PC-3 (cell line): ENCODE measurements at regions of chrX and their contacts with region 1.

Region 1: GRCh38 chrX:54449929-54450328 is 9.7 kb downstream of the TSR2 start:
- DNase-seq: no peak
- ATAC-seq: no peak
- H3K4me3 ChIP-seq: no peak overlapping the region
- H3K27ac ChIP-seq: no peak overlapping the region
- H3K4me1 ChIP-seq: no peaks in the 10 kb centered on the region
- H3K27me3 ChIP-seq: no peaks in the 10 kb centered on the region
- CTCF ChIP-seq: no peak

Region 2: DNA sequence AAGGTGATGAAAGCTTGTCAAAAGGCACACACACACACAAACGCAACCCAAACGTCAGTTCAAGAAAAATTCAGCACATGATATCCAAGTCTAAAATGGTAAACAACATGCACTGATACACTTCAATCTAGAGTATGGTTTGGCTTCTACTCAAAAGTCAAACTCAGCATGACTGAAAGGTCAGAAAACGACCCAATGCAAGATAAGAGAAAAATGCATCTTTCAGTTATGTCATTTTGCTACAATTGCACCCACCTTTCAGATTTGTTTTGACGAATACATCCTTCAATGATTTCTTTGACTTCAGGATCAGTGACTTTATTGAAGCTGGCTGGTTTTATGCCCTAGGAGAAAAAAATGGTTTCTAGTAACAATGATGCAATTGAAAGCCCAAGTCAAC is 148.4 kb before region 1 on chrX:
- CTCF ChIA-PET with region 1: no interaction called
- POLR2A ChIA-PET with region 1: interaction called, 12 read pairs
- intact Hi-C with region 1: no loop called
- DNase-seq: no peak
- ATAC-seq: no peak
- H3K4me3 ChIP-seq: no peak overlapping the region
- H3K27ac ChIP-seq: no peak overlapping the region
- H3K4me1 ChIP-seq: no peaks in the 10 kb centered on the region
- H3K27me3 ChIP-seq: no peaks in the 10 kb centered on the region
- CTCF ChIP-seq: no peak

Region 3: GRCh38 chrX:54479136-54480111 is 29.5 kb after region 1 on chrX:
- CTCF ChIA-PET with region 1: no interaction called
- POLR2A ChIA-PET with region 1: no interaction called
- intact Hi-C with region 1: no loop called
- DNase-seq: no peak
- ATAC-seq: no peak
- H3K4me3 ChIP-seq: no peak overlapping the region
- H3K27ac ChIP-seq: no peak overlapping the region
- H3K4me1 ChIP-seq: peaks cover 9% of the 10 kb centered on the region
- H3K27me3 ChIP-seq: no peaks in the 10 kb centered on the region
- CTCF ChIP-seq: no peak

Region 4: DNA sequence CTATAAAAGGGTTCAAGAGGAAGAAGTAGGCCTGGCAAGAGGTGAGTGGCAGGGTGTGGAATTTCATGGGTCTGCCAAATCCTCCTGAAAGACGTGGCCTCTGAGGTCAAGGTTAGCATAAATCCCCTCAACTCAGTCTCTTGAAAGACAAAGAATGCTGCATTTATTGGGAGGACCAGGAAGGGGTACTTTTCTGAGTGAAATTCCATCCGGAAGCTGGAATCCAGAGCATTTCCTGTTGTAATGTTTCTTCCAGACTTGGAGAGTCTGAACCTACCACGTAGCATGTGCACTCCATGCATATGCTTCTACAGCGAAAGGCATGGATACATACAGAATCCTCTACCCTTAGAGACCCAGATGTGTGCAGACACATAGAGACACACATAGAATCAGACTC is 59.5 kb after region 1 on chrX:
- CTCF ChIA-PET with region 1: no interaction called
- POLR2A ChIA-PET with region 1: no interaction called
- intact Hi-C with region 1: no loop called
- DNase-seq: no peak
- ATAC-seq: no peak
- H3K4me3 ChIP-seq: no peak overlapping the region
- H3K27ac ChIP-seq: no peak overlapping the region
- H3K4me1 ChIP-seq: no peaks in the 10 kb centered on the region
- H3K27me3 ChIP-seq: no peaks in the 10 kb centered on the region
- CTCF ChIP-seq: no peak